Dorsolateral prefrontal cortex (tissue), 120 donors: ENCODE measurements at regions of chr15 and their contacts with region 1.

Region 1: GRCh38 chr15:25508369-25509002 is 69.7 kb upstream of the UBE3A start:
- DNase-seq: peak in 2 of 10 donors; percentile 23 to 43
- H3K4me3 ChIP-seq: no peak overlapping the region
- H3K27ac ChIP-seq: no peak overlapping the region
- H3K27me3 ChIP-seq: no peaks in the 10 kb centered on the region
- CTCF ChIP-seq: peak; percentile 67 to 94 (median 81)

Region 2: GRCh38 chr15:26261966-26262365 is 753.5 kb after region 1 on chr15:
- intact Hi-C with region 1: loop called in 1 of 2 experiments (anchors 2 kb)
- DNase-seq: no peak
- H3K4me3 ChIP-seq: no peak overlapping the region
- H3K27ac ChIP-seq: no peak overlapping the region
- H3K27me3 ChIP-seq: no peaks in the 10 kb centered on the region
- CTCF ChIP-seq: no peak